Activated T-helper 1 cell treated with anti-CD3 and anti-CD28 coated beads, Interleukin-12 subunit alpha, Interleukin-12 subunit beta, Interleukin-2, Interleukin-4 antibody, amounts not matched to agents 30 ng/mL and 10 ng/mL and 1 ng/mL, durations not matched to agents 14 hours and 24 hours and 36 hours (primary cell): ENCODE measurements at regions of chr19 and their contacts with region 1.

Region 1: GRCh38 chr19:55643348-55644176 is at the start of gene ZNF581:
- DNase-seq: peak; percentile 77
- H3K4me3 Mint-ChIP-seq: peak within 1 kb of the TSS; percentile 100
- H3K27ac Mint-ChIP-seq: peak within 1 kb of the TSS; percentile 99
- H3K4me1 Mint-ChIP-seq: peaks cover 43% of the 10 kb centered on the region
- H3K27me3 Mint-ChIP-seq: no peaks in the 10 kb centered on the region
- total RNA-seq, gene ZNF581: 35.6 and 36.4 TPM in 2 replicates

Region 2: GRCh38 chr19:55567708-55568316 is 75.8 kb before region 1 on chr19:
- intact Hi-C with region 1: no loop called
- DNase-seq: no peak
- H3K4me3 Mint-ChIP-seq: no peak overlapping the region
- H3K27ac Mint-ChIP-seq: no peak overlapping the region
- H3K4me1 Mint-ChIP-seq: no peaks in the 10 kb centered on the region
- H3K27me3 Mint-ChIP-seq: peaks cover 4% of the 10 kb centered on the region

Region 3: GRCh38 chr19:55580628-55581144 is 62.9 kb before region 1 on chr19 and contains the start of gene ZNF579:
- intact Hi-C with region 1: loop called (anchors 1 kb)
- DNase-seq: peak; percentile 71
- H3K4me3 Mint-ChIP-seq: peak within 1 kb of the TSS; percentile 91
- H3K27ac Mint-ChIP-seq: peak within 1 kb of the TSS; percentile 83
- H3K4me1 Mint-ChIP-seq: peaks cover 26% of the 10 kb centered on the region
- H3K27me3 Mint-ChIP-seq: peaks cover 13% of the 10 kb centered on the region
- total RNA-seq, gene ZNF579: 10.2 and 11.7 TPM in 2 replicates

Region 4: DNA sequence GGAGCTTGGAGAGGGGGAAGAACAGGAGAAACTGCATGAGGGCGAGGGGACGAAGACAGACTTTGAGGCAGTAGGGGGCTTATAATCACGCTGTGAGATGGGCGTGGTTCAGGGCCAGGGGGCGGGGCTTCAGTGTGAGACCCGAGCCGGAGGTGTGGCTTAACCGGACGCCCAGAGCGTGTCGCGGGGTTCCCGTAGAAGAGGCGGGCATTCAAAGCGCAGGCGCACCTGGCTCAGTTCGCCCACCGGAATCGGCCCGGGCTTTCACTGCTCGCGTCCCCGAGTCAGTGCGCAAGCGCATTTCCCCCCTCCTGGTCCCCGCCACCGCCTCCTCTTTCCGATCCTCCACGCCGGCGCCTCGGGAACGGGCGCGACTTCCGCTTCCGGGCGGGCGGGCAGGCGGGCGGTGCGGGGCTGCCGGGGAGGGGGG is 38.3 kb before region 1 on chr19:
- intact Hi-C with region 1: loop called (anchors 5 kb)
- DNase-seq: peak; percentile 98
- H3K4me3 Mint-ChIP-seq: peak overlapping the region; percentile 86
- H3K27ac Mint-ChIP-seq: peak overlapping the region; percentile 95
- H3K4me1 Mint-ChIP-seq: peaks cover 45% of the 10 kb centered on the region
- H3K27me3 Mint-ChIP-seq: no peaks in the 10 kb centered on the region

Region 5: DNA sequence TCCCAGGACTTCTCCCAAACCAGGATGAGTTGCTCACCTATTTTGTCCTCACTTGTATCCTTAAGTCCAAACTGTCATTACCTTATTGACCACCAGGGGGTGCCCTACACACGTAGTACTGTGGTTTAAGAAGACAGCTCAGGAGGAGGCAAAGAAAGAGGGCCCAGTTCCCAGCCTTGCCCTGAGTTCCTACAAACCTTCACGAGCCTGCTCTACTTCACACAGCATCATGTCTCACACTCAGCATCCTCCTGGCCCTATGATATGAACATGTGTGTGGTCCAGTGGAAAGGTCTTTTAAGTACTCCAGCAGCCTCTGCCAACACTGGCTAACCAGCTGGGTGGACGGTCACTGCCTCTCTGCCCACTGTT is 11.1 kb before region 1 on chr19:
- intact Hi-C with region 1: loop called (anchors 1 kb)
- DNase-seq: peak; percentile 82
- H3K4me3 Mint-ChIP-seq: no peak overlapping the region
- H3K27ac Mint-ChIP-seq: peak overlapping the region; percentile 68
- H3K4me1 Mint-ChIP-seq: peaks cover 47% of the 10 kb centered on the region
- H3K27me3 Mint-ChIP-seq: peaks cover 20% of the 10 kb centered on the region

Region 6: DNA sequence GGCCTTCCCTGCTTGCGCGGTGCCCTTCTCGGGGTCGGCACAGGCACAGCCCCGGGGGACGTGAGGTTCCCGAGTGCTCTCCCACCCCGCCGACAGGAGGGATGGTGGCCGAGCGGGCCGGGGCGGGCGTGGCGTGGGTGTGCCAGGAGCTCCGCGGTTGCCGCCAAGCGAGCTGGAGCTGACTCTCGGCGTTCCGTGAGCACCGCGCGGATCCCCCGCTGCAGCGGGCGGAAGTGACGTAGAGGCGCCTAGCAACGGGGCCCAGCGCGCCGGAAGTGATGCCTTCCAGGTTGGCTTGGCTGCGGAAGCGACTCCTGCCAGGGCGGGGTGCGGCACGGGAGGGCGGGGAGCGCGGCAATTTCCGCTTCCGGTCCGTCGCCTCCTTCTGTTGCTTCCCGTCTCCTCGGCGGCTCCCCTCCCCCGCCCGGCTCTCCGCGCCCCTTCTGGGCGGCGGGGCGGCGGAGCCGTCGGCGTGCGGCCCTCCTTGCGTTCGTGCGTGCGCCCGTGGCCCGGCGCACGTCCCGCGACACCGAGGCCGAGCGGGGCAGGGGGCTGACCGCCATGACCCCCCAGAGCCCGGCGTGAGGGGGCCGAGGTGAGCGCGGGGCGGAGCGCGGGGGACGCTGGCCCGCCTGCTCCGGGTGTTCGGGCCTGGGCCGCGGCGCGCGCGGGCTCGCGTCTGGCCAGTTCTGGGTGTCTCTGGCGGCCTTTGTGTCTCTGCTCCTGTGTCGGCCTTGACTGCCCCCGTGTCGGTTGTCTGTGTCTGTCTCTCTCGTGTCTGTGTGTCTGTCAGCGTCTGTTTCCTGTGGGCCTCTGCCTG is 31.5 kb after region 1 on chr19 and contains the start of gene EPN1:
- intact Hi-C with region 1: loop called (anchors 1 kb)
- DNase-seq: peak; percentile 94
- H3K4me3 Mint-ChIP-seq: peak within 1 kb of the TSS; percentile 98
- H3K27ac Mint-ChIP-seq: peak within 1 kb of the TSS; percentile 95
- H3K4me1 Mint-ChIP-seq: peaks cover 47% of the 10 kb centered on the region
- H3K27me3 Mint-ChIP-seq: no peaks in the 10 kb centered on the region
- total RNA-seq, gene EPN1: 46.0 and 48.3 TPM in 2 replicates

Region 7: DNA sequence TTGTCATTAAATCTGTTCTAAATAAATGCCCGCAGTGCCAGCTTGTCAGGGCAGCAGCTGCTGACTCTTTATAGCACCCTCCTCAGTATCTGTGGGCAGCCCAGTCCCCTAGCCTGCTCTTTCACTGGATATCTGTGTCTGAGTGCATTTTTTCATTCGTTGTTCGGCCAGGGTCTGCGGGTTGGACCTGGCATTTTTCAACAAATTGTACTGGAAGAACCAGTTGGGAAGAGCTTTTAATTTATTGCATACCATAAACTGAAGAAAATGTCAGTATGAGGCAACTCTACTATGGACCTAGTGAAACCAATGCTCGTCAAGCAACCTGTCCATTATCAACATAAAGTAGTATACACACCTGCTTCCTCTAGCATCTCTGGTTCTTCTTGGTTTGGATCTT is 280.0 kb after region 1 on chr19:
- intact Hi-C with region 1: no loop called
- DNase-seq: no peak
- H3K4me3 Mint-ChIP-seq: no peak overlapping the region
- H3K27ac Mint-ChIP-seq: no peak overlapping the region
- H3K4me1 Mint-ChIP-seq: no peaks in the 10 kb centered on the region
- H3K27me3 Mint-ChIP-seq: no peaks in the 10 kb centered on the region